ENCODE measurements at regions of chr11 and their contacts with region 1.

Region 1: DNA sequence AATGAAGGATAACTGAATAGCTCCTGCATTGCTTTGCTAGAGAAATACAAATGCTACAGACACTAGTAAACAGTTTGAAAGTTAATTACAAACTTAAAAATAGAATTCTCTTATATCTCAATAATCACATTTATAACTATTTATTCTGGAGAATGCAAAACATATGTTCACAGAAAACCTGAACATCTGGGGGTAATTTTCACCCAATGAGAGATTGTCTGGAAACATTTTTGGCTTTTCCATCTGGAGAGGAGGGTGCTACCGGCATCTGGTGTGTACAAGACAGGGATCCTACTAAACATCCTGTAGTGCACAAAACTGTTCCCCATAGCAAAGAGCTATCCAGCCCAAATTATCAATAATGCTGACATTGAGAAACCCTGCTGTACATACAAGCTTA is 378.4 kb upstream of the CHORDC1 start:
- DNase-seq: no peak
- H3K4me3 ChIP-seq: no peak overlapping the region
- H3K4me3 Mint-ChIP-seq: no peak overlapping the region
- H3K27ac Mint-ChIP-seq: no peak overlapping the region
- H3K4me1 ChIP-seq: no peaks in the 10 kb centered on the region
- H3K4me1 Mint-ChIP-seq: no peaks in the 10 kb centered on the region
- H3K27me3 ChIP-seq: no peaks in the 10 kb centered on the region
- H3K27me3 Mint-ChIP-seq: no peaks in the 10 kb centered on the region
- CTCF ChIP-seq: no peak

Region 2: DNA sequence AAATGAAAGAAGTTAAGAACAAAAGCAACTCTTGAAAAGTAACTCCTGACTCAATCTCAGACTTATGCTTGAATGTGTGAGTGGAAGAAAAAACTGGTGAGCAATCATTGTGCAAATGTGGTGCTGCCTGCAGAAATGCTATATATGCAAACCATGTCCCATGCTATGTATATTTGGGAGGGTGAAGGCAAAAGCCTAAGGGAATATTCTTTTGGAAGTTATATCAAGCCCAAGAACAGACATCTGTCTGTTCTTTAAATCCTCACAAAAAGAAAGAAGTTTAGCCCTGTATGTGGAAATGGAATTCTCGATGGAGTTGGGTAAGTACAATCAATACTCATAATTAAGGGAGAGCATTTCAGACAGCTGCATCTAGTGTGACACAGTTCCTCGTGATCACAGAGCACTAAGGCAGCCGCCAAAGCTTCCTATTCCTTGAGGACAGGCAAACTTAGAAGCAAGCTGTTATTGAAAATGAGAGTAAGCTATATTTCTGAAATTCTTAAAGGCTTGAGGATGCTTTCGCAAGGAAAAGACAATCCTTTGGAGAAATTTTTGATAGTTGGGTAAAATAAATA is 28.1 kb after region 1 on chr11:
- CTCF ChIA-PET with region 1: no interaction called
- POLR2A ChIA-PET with region 1: interaction called, 10 read pairs
- intact Hi-C with region 1: no loop called
- DNase-seq: no peak
- H3K4me3 ChIP-seq: no peak overlapping the region
- H3K4me3 Mint-ChIP-seq: no peak overlapping the region
- H3K27ac Mint-ChIP-seq: no peak overlapping the region
- H3K4me1 ChIP-seq: no peaks in the 10 kb centered on the region
- H3K4me1 Mint-ChIP-seq: no peaks in the 10 kb centered on the region
- H3K27me3 ChIP-seq: no peaks in the 10 kb centered on the region
- H3K27me3 Mint-ChIP-seq: no peaks in the 10 kb centered on the region
- CTCF ChIP-seq: no peak

Measured in Caco-2 (cell line).